ENCODE measurements at regions of chr11 and their contacts with region 1.

Region 1: DNA sequence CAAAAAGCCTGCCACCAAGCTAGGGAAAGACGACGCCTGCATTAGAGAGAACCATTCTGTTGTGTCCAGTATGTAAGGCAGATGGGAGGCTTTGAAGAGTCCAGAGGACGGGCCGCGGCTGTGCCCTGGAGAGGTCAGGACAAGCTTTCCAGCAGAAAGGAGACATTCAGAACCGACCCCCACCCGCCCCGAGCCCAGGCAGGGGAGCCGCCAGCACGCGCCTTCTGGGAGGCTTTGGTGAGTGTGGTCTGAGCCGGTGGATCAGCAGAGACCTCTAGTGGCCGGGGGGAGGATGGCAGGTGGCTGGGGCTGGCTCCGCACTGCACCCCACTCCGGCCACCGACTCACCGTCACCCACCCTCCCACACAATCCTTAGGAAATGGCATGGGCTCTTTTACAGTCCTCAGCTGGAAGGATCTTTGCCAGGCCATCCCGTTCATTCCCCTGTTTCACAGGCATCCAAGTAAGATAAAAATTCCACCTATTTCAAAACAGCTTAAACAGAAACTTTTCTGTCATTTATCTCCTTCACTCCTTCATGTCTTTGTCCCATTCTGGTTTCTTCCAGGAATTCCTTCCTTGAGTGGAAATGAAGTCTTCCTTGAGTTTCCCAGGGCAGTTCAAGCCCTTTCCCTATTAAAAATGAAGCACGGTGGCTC is 91.2 kb downstream of the FEZ1 start:
- DNase-seq: peak; percentile 91
- H3K4me3 ChIP-seq: peak overlapping the region in 1 of 2 experiments; percentile 19; a peak in 1 of 4 replicates
- H3K27ac ChIP-seq: no peak overlapping the region
- H3K4me1 ChIP-seq: peaks cover 0 to under 1% of the 10 kb centered on the region in 2 experiments; a peak in 1 of 4 replicates
- H3K27me3 ChIP-seq: peaks cover 43% of the 10 kb centered on the region; the same call in 1 of the 2 replicates
- CTCF ChIP-seq: peak; percentile 83
- EP300 ChIP-seq: no peak
- RAD21 ChIP-seq: peak; percentile 86

Region 2: GRCh38 chr11:125091247-125091876 is 313.5 kb before region 1 on chr11:
- CTCF ChIA-PET with region 1: interaction called, 35 read pairs
- POLR2A ChIA-PET with region 1: no interaction called
- DNase-seq: peak; percentile 90
- H3K4me3 ChIP-seq: no peak overlapping the region; a peak in 1 of 4 replicates
- H3K27ac ChIP-seq: peak overlapping the region in 1 of 2 experiments; percentile 17; a peak in 1 of 4 replicates
- H3K4me1 ChIP-seq: peaks cover 4% of the 10 kb centered on the region in 2 experiments; a peak in 2 of 4 replicates
- H3K27me3 ChIP-seq: no peaks in the 10 kb centered on the region
- CTCF ChIP-seq: peak; percentile 79
- EP300 ChIP-seq: no peak
- RAD21 ChIP-seq: peak; percentile 96

Region 3: DNA sequence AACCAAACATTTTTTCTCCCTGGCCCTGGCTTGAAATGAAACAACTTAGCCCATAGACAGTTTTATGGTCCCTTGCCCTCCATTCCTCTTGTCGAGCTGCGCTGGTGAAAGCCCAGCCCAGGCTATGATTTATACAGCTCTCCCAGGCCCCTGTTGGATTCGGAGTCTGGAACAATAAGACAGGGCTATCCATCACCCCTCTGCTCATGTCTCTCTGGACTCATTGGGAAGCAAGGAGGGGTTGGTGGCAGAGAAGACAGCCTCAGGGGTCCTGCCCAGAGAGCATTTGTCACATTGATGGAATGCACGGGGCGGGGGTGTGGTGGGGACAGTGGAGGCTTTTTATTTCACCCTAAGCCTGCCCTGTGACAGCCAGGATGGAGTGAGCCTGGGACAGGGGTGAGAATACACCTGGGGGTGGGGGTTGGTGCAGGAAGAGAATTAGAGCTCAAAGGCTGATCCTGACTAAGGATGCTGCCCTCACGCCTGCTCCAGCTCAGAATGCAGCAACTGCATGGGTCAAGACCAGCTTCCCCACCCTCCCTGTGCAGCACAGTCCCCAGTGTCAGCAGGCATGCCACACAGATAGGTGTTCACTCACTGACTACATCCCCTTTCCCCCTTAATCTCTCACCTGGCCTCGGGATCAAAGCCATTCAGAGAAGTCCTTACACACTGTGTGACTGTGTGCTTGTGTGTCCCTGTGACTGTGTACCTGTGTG is 250.4 kb before region 1 on chr11:
- CTCF ChIA-PET with region 1: interaction called, 12 read pairs
- POLR2A ChIA-PET with region 1: no interaction called
- DNase-seq: no peak
- H3K4me3 ChIP-seq: no peak overlapping the region
- H3K27ac ChIP-seq: no peak overlapping the region
- H3K4me1 ChIP-seq: peaks cover 0 to 8% of the 10 kb centered on the region in 2 experiments; a peak in 1 of 4 replicates
- H3K27me3 ChIP-seq: peaks cover 11% of the 10 kb centered on the region; the same call in 1 of the 2 replicates
- CTCF ChIP-seq: no peak
- EP300 ChIP-seq: no peak
- RAD21 ChIP-seq: no peak

Region 4: DNA sequence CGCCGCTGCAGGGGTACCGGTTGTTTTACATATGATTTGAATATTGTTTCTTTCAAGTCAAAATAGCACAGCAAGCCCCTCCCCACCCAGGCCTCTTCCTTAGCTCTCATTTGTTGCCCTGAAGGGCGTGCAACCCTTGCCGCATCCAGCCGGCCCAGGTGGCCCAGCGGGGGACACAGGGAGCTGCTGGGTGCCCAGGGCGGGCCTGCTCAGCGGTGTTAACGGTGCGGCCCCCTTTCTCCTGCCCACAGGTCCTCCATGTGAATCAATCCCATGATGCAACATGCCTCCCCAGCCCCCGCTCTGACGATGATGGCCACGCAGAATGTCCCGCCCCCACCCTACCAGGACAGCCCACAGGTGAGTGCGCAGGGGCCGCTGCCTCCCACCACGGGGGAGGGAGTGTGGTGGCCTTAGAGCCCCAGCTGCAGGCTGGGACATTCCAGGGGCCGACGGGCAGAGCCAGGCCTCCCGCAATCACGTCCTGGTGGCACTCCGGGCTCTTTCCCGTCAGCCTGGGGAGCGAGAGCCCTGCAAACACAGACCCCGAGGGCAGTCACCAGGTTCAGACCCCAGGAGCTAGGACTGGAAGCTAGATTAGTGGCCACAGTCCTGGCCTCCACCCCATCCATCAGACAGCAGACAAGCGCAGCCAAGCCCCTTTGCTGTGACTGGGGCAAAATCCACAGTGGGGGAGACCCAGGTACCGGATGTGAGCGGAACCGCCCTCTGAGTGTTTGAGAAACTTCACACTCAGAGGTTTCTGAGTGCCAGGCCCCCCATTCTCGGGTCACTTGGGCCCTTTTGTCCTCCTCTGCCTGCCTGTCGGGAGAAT is 53.7 kb before region 1 on chr11:
- CTCF ChIA-PET with region 1: interaction called, 100 read pairs
- POLR2A ChIA-PET with region 1: no interaction called
- DNase-seq: no peak
- H3K4me3 ChIP-seq: no peak overlapping the region
- H3K27ac ChIP-seq: no peak overlapping the region
- H3K4me1 ChIP-seq: no peaks in the 10 kb centered on the region
- H3K27me3 ChIP-seq: no peaks in the 10 kb centered on the region
- CTCF ChIP-seq: no peak
- EP300 ChIP-seq: no peak
- RAD21 ChIP-seq: no peak

Region 5: GRCh38 chr11:125371431-125371935 is 33.4 kb before region 1 on chr11:
- CTCF ChIA-PET with region 1: interaction called, 43 read pairs
- POLR2A ChIA-PET with region 1: no interaction called
- DNase-seq: peak; percentile 46
- H3K4me3 ChIP-seq: no peak overlapping the region
- H3K27ac ChIP-seq: no peak overlapping the region
- H3K4me1 ChIP-seq: peaks cover 0 to 21% of the 10 kb centered on the region in 2 experiments; a peak in 1 of 4 replicates
- H3K27me3 ChIP-seq: peaks cover 25% of the 10 kb centered on the region
- CTCF ChIP-seq: no peak
- EP300 ChIP-seq: no peak
- RAD21 ChIP-seq: 0 out of 2 replicates have a peak, but pooled peaks have one; percentile 5

Region 6: DNA sequence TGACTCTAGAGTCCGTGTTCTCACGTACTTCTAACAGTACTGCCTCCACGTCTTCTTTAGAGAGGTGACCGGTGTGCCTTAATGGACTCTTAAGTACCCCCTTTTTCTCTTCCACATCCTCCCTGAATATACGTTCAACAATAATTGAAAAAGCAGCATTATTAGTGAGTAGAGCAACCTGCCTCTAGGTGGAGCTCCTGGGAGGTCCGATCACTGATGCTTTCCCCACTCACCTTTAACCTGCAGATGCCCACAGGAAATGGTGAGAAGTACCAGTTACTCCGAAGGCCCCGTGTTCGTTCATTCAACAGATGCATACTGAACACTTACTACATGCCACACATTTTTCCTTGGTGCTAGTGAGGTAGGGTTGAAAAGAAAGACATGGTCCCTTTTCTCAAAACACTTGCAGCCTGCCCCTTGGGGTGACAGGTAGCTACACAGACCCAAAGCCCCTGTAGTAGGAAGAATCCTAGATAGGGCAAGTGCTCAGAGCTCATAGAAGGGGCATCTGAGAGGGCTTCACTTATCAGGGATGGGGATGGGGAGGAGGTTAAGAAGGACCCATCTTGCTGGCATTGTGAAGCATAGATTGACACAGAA is 18.4 kb after region 1 on chr11:
- CTCF ChIA-PET with region 1: interaction called, 14 read pairs
- POLR2A ChIA-PET with region 1: no interaction called
- DNase-seq: no peak
- H3K4me3 ChIP-seq: no peak overlapping the region
- H3K27ac ChIP-seq: no peak overlapping the region
- H3K4me1 ChIP-seq: no peaks in the 10 kb centered on the region
- H3K27me3 ChIP-seq: peaks cover 14% of the 10 kb centered on the region; the same call in 1 of the 2 replicates
- CTCF ChIP-seq: peak; percentile 44
- EP300 ChIP-seq: no peak
- RAD21 ChIP-seq: peak; percentile 25; the same call in 1 of the 2 replicates